Activated T-helper 2 cell treated with anti-CD3 and anti-CD28 coated beads, Interferon-gamma antibody, Interleukin-2, Interleukin-4, amounts not matched to agents 10 μg/mL and 5 μg/mL and 100 μg/mL, durations not matched to agents 14 hours and 24 hours and 36 hours (primary cell): ENCODE measurements at regions of chr22 and their contacts with region 1.

Region 1: GRCh38 chr22:30214703-30215407 is 31.7 kb downstream of the LIF start:
- DNase-seq: no peak
- H3K4me3 Mint-ChIP-seq: no peak overlapping the region
- H3K27ac Mint-ChIP-seq: no peak overlapping the region
- H3K4me1 Mint-ChIP-seq: peaks cover 47% of the 10 kb centered on the region
- H3K27me3 Mint-ChIP-seq: no peaks in the 10 kb centered on the region

Region 2: DNA sequence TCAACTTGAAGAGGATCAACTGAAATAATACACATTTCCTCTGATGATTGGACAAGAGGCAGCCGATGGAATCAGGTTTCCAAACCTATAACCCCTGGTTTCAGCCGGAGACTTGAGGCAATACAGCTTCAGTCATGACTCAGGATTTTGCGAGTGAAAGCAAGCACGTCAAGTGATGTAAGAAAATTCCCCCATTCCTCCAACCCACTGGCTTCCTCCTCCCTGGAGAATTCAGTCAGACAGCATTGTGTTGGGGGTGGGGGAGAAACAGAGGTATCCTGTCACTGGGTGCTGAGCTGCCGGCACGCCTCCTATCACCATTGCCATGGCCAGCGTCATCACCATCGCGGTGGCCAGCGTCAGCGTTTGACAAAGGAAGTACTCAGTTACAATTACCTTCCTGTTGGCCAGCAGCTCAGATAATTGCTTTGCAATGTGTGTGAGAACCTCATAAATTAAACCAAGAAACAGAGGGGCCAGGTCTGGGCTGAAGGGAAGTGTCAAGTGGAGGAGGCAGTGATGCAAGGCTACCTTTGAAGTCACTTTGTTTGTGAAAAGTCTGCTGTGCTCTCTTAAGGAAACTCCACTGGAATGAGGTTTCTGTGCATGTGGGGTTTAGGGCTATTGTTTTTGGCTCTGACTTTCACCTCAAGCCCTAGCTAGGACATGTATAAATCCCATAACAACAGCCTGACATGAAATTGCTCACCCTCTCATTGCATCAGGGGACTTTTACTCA is 18.5 kb before region 1 on chr22:
- intact Hi-C with region 1: loop called (anchors 2 kb)
- DNase-seq: no peak
- H3K4me3 Mint-ChIP-seq: peak overlapping the region; percentile 33
- H3K27ac Mint-ChIP-seq: peak overlapping the region; percentile 92
- H3K4me1 Mint-ChIP-seq: peaks cover 73% of the 10 kb centered on the region
- H3K27me3 Mint-ChIP-seq: no peaks in the 10 kb centered on the region

Region 3: DNA sequence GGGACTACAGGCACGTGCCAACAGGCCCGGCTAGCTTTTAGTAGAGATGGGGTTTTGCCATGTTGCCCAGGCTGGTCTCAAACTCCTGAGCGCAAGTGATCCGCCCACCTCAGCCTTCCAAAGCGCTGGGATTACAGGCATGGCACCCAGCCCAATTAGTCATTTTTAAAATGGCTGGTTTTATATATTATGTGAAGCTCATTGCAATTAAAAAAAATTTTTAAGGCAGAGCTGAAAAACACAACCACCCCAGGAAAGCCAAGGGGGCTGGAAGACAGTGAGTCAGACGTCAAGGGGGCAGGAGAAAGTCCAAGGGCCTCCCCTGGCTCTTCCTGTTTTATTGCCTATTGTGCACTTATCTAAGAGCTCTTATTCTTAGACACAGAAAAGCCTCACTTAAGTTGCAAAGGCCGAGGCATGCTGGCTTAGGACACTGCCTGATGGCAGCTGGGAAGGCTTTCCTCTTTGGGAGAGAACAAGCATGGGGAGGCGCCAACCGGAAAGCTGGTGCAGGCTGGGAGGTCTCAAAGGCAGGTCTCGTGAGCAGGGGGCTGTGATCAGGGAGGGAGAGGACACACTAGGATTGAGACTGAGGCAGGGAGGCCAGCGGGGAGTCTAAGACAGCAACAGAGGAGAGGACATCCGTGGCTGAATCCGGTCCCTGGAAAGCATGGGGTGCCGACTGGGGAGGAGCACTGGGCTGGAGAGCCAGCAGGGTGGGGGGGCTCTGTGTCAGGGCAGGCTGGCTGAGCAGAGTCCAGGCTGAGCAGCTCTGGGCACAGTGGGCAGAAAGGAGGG is 62.9 kb after region 1 on chr22:
- intact Hi-C with region 1: no loop called
- DNase-seq: no peak
- H3K4me3 Mint-ChIP-seq: no peak overlapping the region
- H3K27ac Mint-ChIP-seq: peak overlapping the region; percentile 12
- H3K4me1 Mint-ChIP-seq: peaks cover 53% of the 10 kb centered on the region
- H3K27me3 Mint-ChIP-seq: no peaks in the 10 kb centered on the region